Activated CD4-positive, alpha-beta memory T cell treated with anti-CD3 and anti-CD28 coated beads for 36 hours (primary cell): ENCODE measurements at regions of chr22 and their contacts with region 1.

Region 1: GRCh38 chr22:42169055-42169469 is 38.5 kb upstream of the CYP2D6 start:
- DNase-seq: peak; percentile 83
- H3K4me3 Mint-ChIP-seq: no peak overlapping the region
- H3K27ac Mint-ChIP-seq: no peak overlapping the region
- H3K4me1 Mint-ChIP-seq: peaks cover 27% of the 10 kb centered on the region
- H3K27me3 Mint-ChIP-seq: no peaks in the 10 kb centered on the region

Region 2: GRCh38 chr22:42217019-42217751 is 48.1 kb after region 1 on chr22:
- CTCF ChIA-PET with region 1: interaction called, 4 read pairs
- POLR2A ChIA-PET with region 1: no interaction called
- intact Hi-C with region 1: loop called (anchors 2 kb)
- DNase-seq: peak; percentile 60
- H3K4me3 Mint-ChIP-seq: peak overlapping the region; percentile 38
- H3K27ac Mint-ChIP-seq: peak overlapping the region; percentile 95
- H3K4me1 Mint-ChIP-seq: peaks cover 45% of the 10 kb centered on the region
- H3K27me3 Mint-ChIP-seq: no peaks in the 10 kb centered on the region

Region 3: DNA sequence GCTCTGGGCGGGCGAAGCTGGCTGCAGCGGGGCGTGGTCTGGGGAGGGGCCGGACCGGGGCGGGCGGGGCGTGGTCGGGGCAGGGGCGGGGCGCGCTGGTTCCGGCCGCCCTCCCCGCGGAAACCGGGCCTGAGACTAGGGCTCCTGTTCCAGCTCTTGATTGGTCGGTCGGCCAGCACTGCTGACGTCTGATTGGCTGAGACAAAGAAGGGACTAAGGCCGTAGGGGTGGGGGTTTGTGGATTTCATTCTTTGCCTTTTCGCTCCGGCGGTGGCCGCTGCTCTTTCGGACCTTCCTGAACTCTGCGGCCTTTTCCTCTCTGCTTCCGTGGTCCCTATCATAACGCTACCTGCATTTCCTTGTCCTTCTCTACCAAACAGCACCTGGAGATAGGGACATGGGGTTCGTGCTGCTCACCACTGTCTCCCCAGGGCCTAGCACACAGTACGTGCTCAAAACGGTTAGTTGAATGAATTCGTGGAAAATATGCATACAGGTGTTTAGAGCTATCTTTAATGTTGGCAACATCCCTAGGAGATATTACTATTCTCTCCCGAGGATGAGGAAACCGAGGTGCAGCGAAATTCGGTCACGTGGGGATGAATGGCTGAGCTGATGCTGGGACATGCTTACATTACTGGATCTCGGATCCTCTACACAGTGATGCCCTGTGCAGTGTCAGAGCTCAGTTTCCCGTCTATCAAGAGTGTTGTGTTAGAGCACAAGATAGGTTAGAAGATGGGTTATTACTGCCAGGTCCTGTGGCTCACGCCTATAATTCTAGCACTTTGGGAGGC is 200.4 kb after region 1 on chr22:
- CTCF ChIA-PET with region 1: interaction called, 7 read pairs
- POLR2A ChIA-PET with region 1: interaction called, 3 read pairs
- intact Hi-C with region 1: loop called (anchors 1 kb)
- DNase-seq: peak; percentile 92
- H3K4me3 Mint-ChIP-seq: peak overlapping the region; percentile 82
- H3K27ac Mint-ChIP-seq: peak overlapping the region; percentile 39
- H3K4me1 Mint-ChIP-seq: peaks cover 13% of the 10 kb centered on the region
- H3K27me3 Mint-ChIP-seq: peaks cover 22% of the 10 kb centered on the region

Region 4: DNA sequence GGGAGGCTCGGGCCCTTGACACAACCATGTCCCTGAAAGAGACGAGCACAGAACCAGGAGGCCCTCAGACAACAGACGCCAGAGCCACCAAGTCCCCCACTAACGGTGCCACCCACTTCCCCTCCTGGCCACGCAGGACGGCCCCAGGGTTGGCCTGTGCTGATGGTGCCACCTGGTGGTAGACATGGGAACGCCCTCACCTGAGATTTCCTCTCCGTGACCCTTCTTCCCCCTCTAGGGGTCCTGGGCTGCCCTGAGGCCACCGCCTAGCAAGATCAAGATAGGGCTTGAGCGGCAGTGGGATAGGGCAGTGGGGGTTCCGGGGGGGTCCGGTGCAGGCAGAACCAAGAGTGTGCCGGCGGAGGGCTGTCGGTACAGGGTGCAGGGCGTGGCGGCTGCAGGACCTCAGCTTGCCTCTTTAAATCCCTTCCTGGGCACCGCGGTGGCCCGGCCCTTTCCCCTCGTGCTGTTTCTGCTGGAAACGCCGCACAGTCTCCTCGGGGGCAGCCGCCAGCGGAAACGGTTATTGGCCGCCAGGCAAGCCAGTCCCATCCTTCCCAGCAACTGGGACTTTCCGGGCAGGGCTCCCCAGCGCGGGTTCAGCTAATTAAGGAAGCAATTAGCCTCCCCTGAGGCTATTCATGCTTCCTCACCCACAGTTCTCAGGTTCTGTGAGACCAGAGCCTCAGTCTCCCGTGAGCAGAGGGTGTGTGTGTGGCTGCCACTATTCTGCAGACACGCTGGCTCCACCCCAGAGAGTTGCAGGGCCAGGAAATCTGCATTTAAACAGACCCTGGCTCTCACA is 268.6 kb after region 1 on chr22:
- CTCF ChIA-PET with region 1: interaction called, 25 read pairs
- POLR2A ChIA-PET with region 1: no interaction called
- intact Hi-C with region 1: loop called (anchors 1 kb)
- DNase-seq: peak; percentile 86
- H3K4me3 Mint-ChIP-seq: peak overlapping the region; percentile 74
- H3K27ac Mint-ChIP-seq: peak overlapping the region; percentile 23
- H3K4me1 Mint-ChIP-seq: peaks cover 18% of the 10 kb centered on the region
- H3K27me3 Mint-ChIP-seq: no peaks in the 10 kb centered on the region